A549 (cell line): ENCODE measurements at regions of chr10 and their contacts with region 1.

Region 1: GRCh38 chr10:103238506-103239252 is 7.0 kb upstream of the RPEL1 start:
- DNase-seq: peak; percentile 59 to 98
- ATAC-seq: peak; percentile 62 to 83
- H3K4me3 ChIP-seq: no peak overlapping the region
- H3K27ac ChIP-seq: peak overlapping the region; percentile 96 to 100
- H3K4me1 ChIP-seq: peaks cover 61% of the 10 kb centered on the region
- CTCF ChIP-seq: peak; percentile 63
- EP300 ChIP-seq: peak in 1 of 2 experiments; percentile 58; a peak in 1 of 5 replicates
- POLR2A ChIP-seq: no peak
- RAD21 ChIP-seq: peak; percentile 76 to 84

Region 2: GRCh38 chr10:103125323-103126267 is 113.1 kb before region 1 on chr10:
- CTCF ChIA-PET with region 1: interaction called, 14 read pairs
- POLR2A ChIA-PET with region 1: no interaction called
- DNase-seq: no peak
- ATAC-seq: no peak
- H3K4me3 ChIP-seq: no peak overlapping the region
- H3K27ac ChIP-seq: no peak overlapping the region
- H3K4me1 ChIP-seq: peaks cover 57% of the 10 kb centered on the region
- CTCF ChIP-seq: no peak
- EP300 ChIP-seq: no peak
- POLR2A ChIP-seq: no peak
- RAD21 ChIP-seq: no peak

Region 3: DNA sequence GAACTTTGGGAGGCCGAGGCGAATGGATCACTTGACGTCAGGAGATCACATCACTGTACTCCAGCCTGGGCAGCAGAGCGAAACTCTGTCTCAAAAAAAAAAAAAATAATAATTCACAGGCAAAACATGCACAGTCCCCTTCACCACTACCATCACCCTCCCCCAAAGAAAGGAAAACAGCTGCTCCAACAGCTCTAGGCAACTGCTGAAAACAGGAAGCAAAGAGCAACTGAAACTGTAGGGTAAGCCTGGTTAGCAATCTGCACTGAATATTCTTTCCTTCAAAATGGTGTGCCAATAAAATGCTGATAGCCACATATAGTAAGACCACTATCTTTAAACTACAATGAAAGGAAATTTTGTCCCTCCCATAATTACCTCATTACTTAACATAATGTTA is 57.4 kb before region 1 on chr10:
- CTCF ChIA-PET with region 1: interaction called, 20 read pairs
- POLR2A ChIA-PET with region 1: interaction called, 6 read pairs
- DNase-seq: no peak
- ATAC-seq: peak in 1 of 2 experiments; percentile 16; a peak in 2 of 6 replicates
- H3K4me3 ChIP-seq: no peak overlapping the region
- H3K27ac ChIP-seq: no peak overlapping the region
- H3K4me1 ChIP-seq: peaks cover 52% of the 10 kb centered on the region
- CTCF ChIP-seq: no peak
- EP300 ChIP-seq: no peak
- POLR2A ChIP-seq: no peak
- RAD21 ChIP-seq: no peak

Region 4: GRCh38 chr10:103578782-103579382 is 340.2 kb after region 1 on chr10:
- CTCF ChIA-PET with region 1: no interaction called
- POLR2A ChIA-PET with region 1: no interaction called
- DNase-seq: peak; percentile 33 to 39
- ATAC-seq: peak; percentile 37 to 50; a peak in 3 of 6 replicates
- H3K4me3 ChIP-seq: no peak overlapping the region
- H3K27ac ChIP-seq: peak overlapping the region in 1 of 2 experiments; percentile 52; a peak in 3 of 6 replicates
- H3K4me1 ChIP-seq: peaks cover 30% of the 10 kb centered on the region
- CTCF ChIP-seq: no peak
- EP300 ChIP-seq: no peak
- POLR2A ChIP-seq: no peak
- RAD21 ChIP-seq: no peak